Endothelial cell of umbilical vein (primary cell): ENCODE measurements at regions of chr12 and their contacts with region 1.

Region 1: GRCh38 chr12:1939801-1940607 is 21.6 kb upstream of the CACNA2D4 start:
- DNase-seq: peak; percentile 85
- H3K4me3 ChIP-seq: no peak overlapping the region
- H3K27ac ChIP-seq: no peak overlapping the region
- H3K4me1 ChIP-seq: no peaks in the 10 kb centered on the region
- H3K27me3 ChIP-seq: no peaks in the 10 kb centered on the region
- CTCF ChIP-seq: peak; percentile 91 to 98
- POLR2A ChIP-seq: no peak

Region 2: GRCh38 chr12:1634590-1635191 is 305.3 kb before region 1 on chr12:
- CTCF ChIA-PET with region 1: interaction called, 79 read pairs
- POLR2A ChIA-PET with region 1: no interaction called
- dilution Hi-C with region 1: loop called (anchors 25 kb)
- intact Hi-C with region 1: loop called (anchors 1 kb)
- DNase-seq: peak; percentile 65
- H3K4me3 ChIP-seq: no peak overlapping the region
- H3K27ac ChIP-seq: no peak overlapping the region
- H3K4me1 ChIP-seq: peaks cover 5% of the 10 kb centered on the region
- H3K27me3 ChIP-seq: peaks cover 36 to 42% of the 10 kb centered on the region in 2 experiments
- CTCF ChIP-seq: peak; percentile 85 to 87
- POLR2A ChIP-seq: no peak

Region 3: DNA sequence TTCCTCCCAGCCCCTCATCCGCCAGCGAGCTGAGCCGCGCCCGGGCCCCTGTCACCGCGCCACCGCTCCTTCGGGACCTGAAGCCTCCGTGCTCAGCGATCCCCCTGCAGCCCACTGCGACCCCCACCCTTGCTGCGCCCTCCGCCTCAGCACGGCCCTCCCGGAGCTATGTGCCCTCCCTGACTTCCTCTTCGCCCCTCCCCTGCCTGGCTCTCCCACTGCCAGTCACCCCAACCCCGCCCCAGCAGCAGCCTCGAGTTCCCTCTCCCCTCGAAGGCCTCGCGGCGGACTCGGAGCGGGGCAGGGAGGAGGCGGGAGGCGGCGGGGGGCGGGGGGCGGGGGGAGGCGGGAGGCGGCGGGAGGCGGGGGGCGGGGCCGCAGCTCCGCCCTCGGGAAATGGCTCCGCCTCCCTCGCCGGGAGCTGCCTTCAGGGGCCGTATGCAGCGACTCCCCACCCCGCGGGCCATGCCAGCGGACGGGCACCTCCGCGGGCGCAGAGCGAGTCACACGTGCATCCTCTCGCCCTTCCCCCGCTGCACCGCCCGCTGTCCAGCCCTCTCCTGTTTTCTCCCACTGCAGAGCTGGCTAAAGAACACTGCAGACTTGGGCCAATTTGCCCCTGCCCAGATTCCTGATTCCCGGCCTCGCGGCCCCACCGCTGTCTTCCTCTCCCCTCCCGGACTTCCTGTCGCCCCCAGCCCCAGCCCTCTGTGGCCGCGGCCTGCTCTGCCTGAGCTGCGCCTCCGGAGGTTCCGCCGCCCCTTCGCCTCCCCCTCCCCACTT is 278.3 kb before region 1 on chr12:
- CTCF ChIA-PET with region 1: interaction called, 69 read pairs
- POLR2A ChIA-PET with region 1: no interaction called
- dilution Hi-C with region 1: no loop called
- intact Hi-C with region 1: no loop called
- DNase-seq: peak; percentile 90
- H3K4me3 ChIP-seq: peak overlapping the region in 1 of 3 experiments; percentile 37
- H3K27ac ChIP-seq: no peak overlapping the region
- H3K4me1 ChIP-seq: peaks cover 13% of the 10 kb centered on the region
- H3K27me3 ChIP-seq: no peaks in the 10 kb centered on the region
- CTCF ChIP-seq: no peak
- POLR2A ChIP-seq: no peak

Region 4: DNA sequence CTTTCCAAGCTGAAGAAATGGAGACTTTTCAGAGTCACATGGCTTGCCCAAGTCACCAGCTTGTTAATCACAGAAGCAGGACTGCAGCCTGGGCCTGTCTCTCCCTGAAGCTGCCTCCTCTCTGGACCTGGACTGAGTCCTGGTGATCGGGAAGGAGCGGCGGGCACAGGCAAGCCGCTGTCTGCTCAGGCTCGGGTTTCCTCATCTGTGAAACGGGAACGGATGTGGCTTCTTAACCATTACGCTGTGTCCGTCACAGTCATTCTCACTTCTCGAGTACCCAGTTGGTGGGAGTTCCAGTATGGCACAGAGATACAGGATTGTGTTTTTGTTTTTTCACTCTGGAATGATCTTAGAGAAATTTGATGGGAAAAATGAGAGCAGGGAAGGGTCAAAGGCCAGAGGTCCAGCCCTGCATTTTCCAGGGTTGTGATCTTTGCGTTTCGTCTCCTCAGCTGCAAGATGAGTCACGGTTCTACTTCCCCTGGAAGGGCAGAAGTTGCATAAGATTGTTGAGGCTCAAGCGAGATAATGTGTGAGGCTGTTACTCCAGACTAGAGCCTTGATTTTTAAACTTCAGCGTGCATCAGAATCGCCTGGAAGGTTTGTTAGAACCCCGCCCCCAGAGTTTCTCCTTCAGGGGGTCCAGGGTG is 127.2 kb before region 1 on chr12:
- CTCF ChIA-PET with region 1: interaction called, 30 read pairs
- POLR2A ChIA-PET with region 1: no interaction called
- dilution Hi-C with region 1: no loop called
- intact Hi-C with region 1: no loop called
- DNase-seq: peak; percentile 33
- H3K4me3 ChIP-seq: no peak overlapping the region
- H3K27ac ChIP-seq: peak overlapping the region; percentile 36
- H3K4me1 ChIP-seq: peaks cover 34% of the 10 kb centered on the region
- H3K27me3 ChIP-seq: peaks cover 0 to 2% of the 10 kb centered on the region in 2 experiments
- CTCF ChIP-seq: no peak
- POLR2A ChIP-seq: no peak

Region 5: GRCh38 chr12:1927751-1928351 is 12.2 kb before region 1 on chr12:
- CTCF ChIA-PET with region 1: interaction called, 18 read pairs
- POLR2A ChIA-PET with region 1: no interaction called
- dilution Hi-C with region 1: no loop called
- intact Hi-C with region 1: no loop called
- DNase-seq: no peak
- H3K4me3 ChIP-seq: no peak overlapping the region
- H3K27ac ChIP-seq: no peak overlapping the region
- H3K4me1 ChIP-seq: no peaks in the 10 kb centered on the region
- H3K27me3 ChIP-seq: peaks cover 0 to 9% of the 10 kb centered on the region in 2 experiments
- CTCF ChIP-seq: no peak
- POLR2A ChIP-seq: no peak

Region 6: DNA sequence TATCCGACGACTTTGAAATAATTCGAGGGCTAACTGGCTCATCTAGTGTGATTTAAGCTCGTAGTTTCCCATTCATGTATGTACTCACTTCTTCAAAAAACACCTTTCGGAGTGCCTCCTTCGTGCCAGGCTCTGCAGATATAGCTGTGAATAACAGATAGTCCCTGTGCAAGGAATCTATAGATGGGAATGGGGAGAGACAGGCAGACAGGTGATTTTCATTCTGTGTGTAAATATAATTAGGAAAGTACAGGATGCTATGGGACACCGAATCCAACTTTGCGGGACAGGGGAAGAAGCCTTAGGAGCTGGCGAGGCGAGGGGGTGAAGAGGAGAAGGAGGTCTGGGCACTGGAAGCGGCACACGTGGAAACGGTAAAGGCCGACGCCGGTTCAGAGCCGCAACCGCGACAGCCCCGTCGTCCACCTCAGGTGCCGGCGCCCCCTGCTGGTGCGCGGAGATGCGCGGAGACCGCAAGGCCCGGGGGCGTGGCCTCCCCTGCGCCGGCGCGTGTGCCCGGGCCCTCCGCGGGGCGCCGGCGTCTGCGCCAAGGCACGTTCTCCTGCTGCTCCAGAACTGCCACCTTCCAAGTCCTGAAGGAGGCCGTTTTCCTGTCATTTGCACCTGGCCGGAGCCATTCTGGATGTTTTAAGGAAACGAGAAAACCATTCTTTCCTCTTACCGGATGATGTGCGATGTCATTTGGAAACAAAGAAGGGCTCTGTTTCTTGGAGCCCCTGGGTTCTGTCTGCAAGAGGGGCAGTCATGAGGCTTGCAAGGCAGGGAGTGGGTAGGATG is 94.8 kb after region 1 on chr12:
- CTCF ChIA-PET with region 1: interaction called, 11 read pairs
- POLR2A ChIA-PET with region 1: no interaction called
- dilution Hi-C with region 1: no loop called
- intact Hi-C with region 1: no loop called
- DNase-seq: peak; percentile 69
- H3K4me3 ChIP-seq: no peak overlapping the region
- H3K27ac ChIP-seq: no peak overlapping the region
- H3K4me1 ChIP-seq: peaks cover 2% of the 10 kb centered on the region
- H3K27me3 ChIP-seq: peaks cover 12 to 24% of the 10 kb centered on the region in 2 experiments
- CTCF ChIP-seq: peak; percentile 90 to 94
- POLR2A ChIP-seq: no peak

Region 7: GRCh38 chr12:2168808-2169207 is 228.8 kb after region 1 on chr12:
- CTCF ChIA-PET with region 1: no interaction called
- POLR2A ChIA-PET with region 1: no interaction called
- dilution Hi-C with region 1: no loop called
- intact Hi-C with region 1: no loop called
- DNase-seq: no peak
- H3K4me3 ChIP-seq: no peak overlapping the region
- H3K27ac ChIP-seq: no peak overlapping the region
- H3K4me1 ChIP-seq: no peaks in the 10 kb centered on the region
- H3K27me3 ChIP-seq: no peaks in the 10 kb centered on the region
- CTCF ChIP-seq: no peak
- POLR2A ChIP-seq: no peak

Region 8: DNA sequence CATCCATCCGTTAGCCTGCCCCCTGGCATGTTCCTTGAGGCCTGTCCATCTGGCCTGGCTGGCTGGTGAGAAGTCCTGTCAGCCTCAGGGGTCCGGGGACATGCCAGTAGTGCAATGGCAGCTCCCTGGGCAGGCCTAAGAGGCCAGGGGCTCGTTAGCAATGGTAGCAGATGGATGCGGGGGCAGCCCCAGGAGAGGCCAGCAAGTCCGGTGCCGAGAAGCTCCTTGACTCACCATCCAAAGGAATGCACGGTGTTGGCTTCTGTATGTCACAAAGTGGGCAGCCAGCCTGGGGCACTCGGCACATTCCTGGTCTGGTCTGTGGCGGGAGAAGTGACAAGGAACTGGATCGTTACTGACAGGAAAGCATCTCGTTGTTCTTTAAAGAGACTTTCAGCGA is 432.7 kb after region 1 on chr12:
- CTCF ChIA-PET with region 1: no interaction called
- POLR2A ChIA-PET with region 1: no interaction called
- dilution Hi-C with region 1: no loop called
- intact Hi-C with region 1: no loop called
- DNase-seq: no peak
- H3K4me3 ChIP-seq: no peak overlapping the region
- H3K27ac ChIP-seq: no peak overlapping the region
- H3K4me1 ChIP-seq: no peaks in the 10 kb centered on the region
- H3K27me3 ChIP-seq: no peaks in the 10 kb centered on the region
- CTCF ChIP-seq: no peak
- POLR2A ChIP-seq: no peak